Mammary epithelial cell (primary cell): ENCODE measurements at regions of chr4 and their contacts with region 1.

Region 1: DNA sequence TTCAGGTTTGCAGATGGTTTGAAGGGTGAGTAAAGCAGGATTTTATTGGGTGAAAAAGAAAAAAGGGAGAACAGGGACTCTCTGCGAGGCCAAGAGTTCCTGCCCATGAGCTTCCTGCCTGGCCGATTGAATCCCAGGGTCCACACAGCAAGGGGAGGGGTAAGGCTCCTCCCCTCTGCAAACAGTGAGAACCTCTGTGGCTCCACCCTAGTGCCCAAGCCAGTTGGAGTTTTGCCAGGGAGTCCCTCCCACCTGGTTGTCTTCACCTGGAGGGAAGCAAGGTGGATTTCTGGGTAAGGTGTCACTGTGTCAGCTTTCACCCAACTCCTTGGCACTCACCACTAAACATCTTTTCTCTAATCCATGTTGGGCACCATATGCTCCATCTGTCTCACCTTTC is 70.9 kb downstream of the PDHA2 start:
- DNase-seq: no peak
- H3K4me3 ChIP-seq: no peak overlapping the region
- H3K27ac ChIP-seq: no peak overlapping the region
- H3K4me1 ChIP-seq: no peaks in the 10 kb centered on the region
- H3K27me3 ChIP-seq: no peaks in the 10 kb centered on the region
- CTCF ChIP-seq: no peak

Region 2: DNA sequence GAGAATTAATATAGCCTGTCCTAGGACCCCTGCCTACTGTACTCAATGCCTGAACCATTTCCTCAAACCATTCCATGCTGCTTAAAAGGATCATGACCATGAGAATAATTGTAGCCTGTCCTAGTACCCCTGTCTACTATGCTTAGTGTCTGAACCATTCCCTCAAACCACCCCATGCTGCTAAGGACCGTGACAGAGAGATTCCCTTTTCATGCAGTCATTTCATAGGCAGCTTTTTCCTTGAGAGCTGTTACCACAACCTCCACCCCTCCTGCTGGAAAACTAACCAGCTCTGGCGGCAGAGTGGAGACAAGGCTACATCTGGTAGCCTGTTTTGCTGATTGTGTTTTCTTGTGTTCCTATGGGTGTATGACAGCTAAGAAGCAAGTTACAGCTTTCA is 1878.0 kb before region 1 on chr4:
- CTCF ChIA-PET with region 1: interaction called, 10 read pairs
- dilution Hi-C with region 1: no loop called
- in situ Hi-C with region 1: no loop called
- intact Hi-C with region 1: no loop called
- DNase-seq: no peak
- H3K4me3 ChIP-seq: no peak overlapping the region
- H3K27ac ChIP-seq: no peak overlapping the region
- H3K4me1 ChIP-seq: no peaks in the 10 kb centered on the region
- H3K27me3 ChIP-seq: no peaks in the 10 kb centered on the region
- CTCF ChIP-seq: no peak

Region 3: DNA sequence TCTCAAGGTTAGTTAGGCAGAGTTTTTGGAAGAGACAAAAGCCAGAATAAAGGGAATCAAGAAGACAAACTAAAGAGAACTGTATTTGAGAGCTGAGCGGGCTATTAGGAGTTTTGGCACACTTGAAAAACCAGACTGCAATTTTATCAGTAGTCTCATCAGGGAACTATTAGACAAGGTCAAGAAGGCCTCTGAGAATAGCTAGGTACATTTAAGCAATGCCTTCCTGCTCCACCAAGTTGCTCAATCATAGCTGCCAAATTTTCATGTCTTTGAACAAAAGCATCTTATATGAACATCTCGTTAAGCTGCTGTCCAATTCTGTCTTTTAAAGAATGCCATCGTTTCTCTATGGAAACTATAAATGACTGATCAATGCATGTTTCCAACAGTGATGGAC is 163.4 kb before region 1 on chr4:
- CTCF ChIA-PET with region 1: no interaction called
- dilution Hi-C with region 1: no loop called
- in situ Hi-C with region 1: no loop called
- intact Hi-C with region 1: no loop called
- DNase-seq: no peak
- H3K4me3 ChIP-seq: no peak overlapping the region
- H3K27ac ChIP-seq: no peak overlapping the region
- H3K4me1 ChIP-seq: no peaks in the 10 kb centered on the region
- H3K27me3 ChIP-seq: no peaks in the 10 kb centered on the region
- CTCF ChIP-seq: no peak